ENCODE measurements at regions of chr17 and their contacts with region 1.

Region 1: DNA sequence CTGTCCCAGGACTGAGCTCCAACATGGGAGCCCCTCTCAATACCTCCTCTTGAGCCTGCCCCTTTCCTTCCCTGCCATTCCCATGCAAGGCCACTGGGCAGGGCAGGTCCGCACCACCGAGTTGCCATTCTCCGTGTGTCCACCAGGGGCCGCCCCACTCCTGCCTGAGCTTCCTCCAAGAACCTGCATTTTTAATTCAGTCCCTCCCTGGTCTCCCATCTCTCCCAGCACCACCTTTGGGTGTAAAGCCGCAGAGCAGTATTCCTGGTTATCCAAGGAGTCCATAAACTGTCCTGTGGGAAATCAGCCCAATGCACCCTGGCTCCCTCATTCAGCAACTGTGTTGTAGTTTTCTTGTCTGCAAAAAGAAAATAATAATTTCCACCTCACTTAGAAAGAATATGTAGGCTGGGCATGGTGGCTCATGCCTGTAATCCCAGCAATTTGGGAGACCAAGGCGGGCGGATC is 15.9 kb upstream of the ANKRD40CL start:
- DNase-seq: peak; percentile 86
- ATAC-seq: peak; percentile 71
- H3K4me3 Mint-ChIP-seq: no peak overlapping the region
- H3K27ac Mint-ChIP-seq: no peak overlapping the region
- H3K4me1 Mint-ChIP-seq: peaks cover 33% of the 10 kb centered on the region
- H3K27me3 Mint-ChIP-seq: peaks cover 35% of the 10 kb centered on the region

Region 2: GRCh38 chr17:50668025-50668837 is 115.0 kb before region 1 on chr17:
- CTCF ChIA-PET with region 1: no interaction called
- DNase-seq: no peak
- ATAC-seq: no peak
- H3K4me3 Mint-ChIP-seq: no peak overlapping the region
- H3K27ac Mint-ChIP-seq: no peak overlapping the region
- H3K4me1 Mint-ChIP-seq: no peaks in the 10 kb centered on the region
- H3K27me3 Mint-ChIP-seq: no peaks in the 10 kb centered on the region

Region 3: GRCh38 chr17:50763716-50764475 is 19.3 kb before region 1 on chr17:
- CTCF ChIA-PET with region 1: interaction called, 14 read pairs
- DNase-seq: no peak
- ATAC-seq: no peak
- H3K4me3 Mint-ChIP-seq: no peak overlapping the region
- H3K27ac Mint-ChIP-seq: no peak overlapping the region
- H3K4me1 Mint-ChIP-seq: peaks cover 31% of the 10 kb centered on the region
- H3K27me3 Mint-ChIP-seq: peaks cover 21% of the 10 kb centered on the region

Region 4: GRCh38 chr17:50816771-50817751 is 33.8 kb after region 1 on chr17:
- CTCF ChIA-PET with region 1: interaction called, 17 read pairs
- DNase-seq: peak; percentile 53
- ATAC-seq: peak; percentile 66
- H3K4me3 Mint-ChIP-seq: no peak overlapping the region
- H3K27ac Mint-ChIP-seq: no peak overlapping the region
- H3K4me1 Mint-ChIP-seq: peaks cover 39% of the 10 kb centered on the region
- H3K27me3 Mint-ChIP-seq: peaks cover 29% of the 10 kb centered on the region

Region 5: GRCh38 chr17:50848039-50848438 is 64.8 kb after region 1 on chr17:
- CTCF ChIA-PET with region 1: interaction called, 57 read pairs
- DNase-seq: peak; percentile 19
- ATAC-seq: no peak
- H3K4me3 Mint-ChIP-seq: no peak overlapping the region
- H3K27ac Mint-ChIP-seq: no peak overlapping the region
- H3K4me1 Mint-ChIP-seq: peaks cover 17% of the 10 kb centered on the region
- H3K27me3 Mint-ChIP-seq: peaks cover 2% of the 10 kb centered on the region

Region 6: GRCh38 chr17:50865984-50866774 is 83.0 kb after region 1 on chr17 and contains the start of gene TOB1:
- CTCF ChIA-PET with region 1: interaction called, 10 read pairs
- DNase-seq: peak; percentile 97
- ATAC-seq: peak; percentile 75
- H3K4me3 Mint-ChIP-seq: peak within 1 kb of the TSS; percentile 98
- H3K27ac Mint-ChIP-seq: peak within 1 kb of the TSS; percentile 96
- H3K4me1 Mint-ChIP-seq: peaks cover 43% of the 10 kb centered on the region
- H3K27me3 Mint-ChIP-seq: peaks cover 14% of the 10 kb centered on the region
- total RNA-seq, gene TOB1: 34.1 to 47.5 TPM

Region 7: GRCh38 chr17:50963139-50963538 is 179.9 kb after region 1 on chr17:
- CTCF ChIA-PET with region 1: interaction called, 17 read pairs
- DNase-seq: no peak
- ATAC-seq: no peak
- H3K4me3 Mint-ChIP-seq: no peak overlapping the region
- H3K27ac Mint-ChIP-seq: no peak overlapping the region
- H3K4me1 Mint-ChIP-seq: peaks cover 10% of the 10 kb centered on the region
- H3K27me3 Mint-ChIP-seq: no peaks in the 10 kb centered on the region